Activated CD4-positive, alpha-beta memory T cell treated with anti-CD3 and anti-CD28 coated beads, Interleukin-2, amount 10 ng/mL, durations not matched to agents 7 days and 5 days (primary cell): ENCODE measurements at regions of chr11 and their contacts with region 1.

Region 1: GRCh38 chr11:75142714-75143419 is 8.0 kb upstream of the SLCO2B1 start:
- DNase-seq: peak; percentile 86
- H3K4me3 Mint-ChIP-seq: peak overlapping the region; percentile 45
- H3K27ac Mint-ChIP-seq: peak overlapping the region; percentile 89
- H3K4me1 Mint-ChIP-seq: peaks cover 57% of the 10 kb centered on the region
- H3K27me3 Mint-ChIP-seq: peaks cover 15% of the 10 kb centered on the region

Region 2: DNA sequence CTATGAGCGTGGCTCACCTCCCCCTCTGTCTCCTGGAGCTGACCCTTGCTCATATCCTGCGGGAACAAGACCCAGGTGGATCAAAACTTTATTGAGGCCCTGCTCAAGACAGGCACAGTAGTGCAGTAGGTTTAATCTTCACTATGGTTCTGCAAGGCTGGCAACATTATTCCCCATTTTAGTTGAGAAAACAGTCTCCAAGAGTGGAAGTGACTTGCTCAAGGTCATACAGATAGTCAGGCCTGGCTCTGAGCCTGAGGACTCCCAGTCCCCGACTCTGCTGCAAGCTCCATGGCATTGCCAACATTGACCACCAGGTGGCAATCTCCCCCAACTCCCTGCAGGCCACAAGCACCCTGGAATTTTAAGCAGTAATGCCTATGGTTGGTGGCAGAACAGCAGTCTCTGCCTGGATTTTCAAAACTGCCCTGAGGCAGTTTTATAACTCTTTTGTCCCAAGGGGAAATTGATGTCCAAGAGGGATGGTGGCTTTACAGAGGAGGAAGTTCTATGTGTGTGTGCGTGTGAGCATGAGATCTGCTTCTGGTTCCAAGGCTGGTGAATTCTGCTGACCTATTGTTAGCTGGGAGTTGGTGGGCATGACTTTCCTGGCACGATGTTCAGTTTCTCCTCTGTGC is 120.0 kb before region 1 on chr11:
- CTCF ChIA-PET with region 1: interaction called, 14 read pairs
- POLR2A ChIA-PET with region 1: no interaction called
- DNase-seq: peak; percentile 79
- H3K4me3 Mint-ChIP-seq: no peak overlapping the region
- H3K27ac Mint-ChIP-seq: no peak overlapping the region
- H3K4me1 Mint-ChIP-seq: no peaks in the 10 kb centered on the region
- H3K27me3 Mint-ChIP-seq: no peaks in the 10 kb centered on the region

Region 3: GRCh38 chr11:75041263-75041662 is 101.6 kb before region 1 on chr11:
- CTCF ChIA-PET with region 1: no interaction called
- POLR2A ChIA-PET with region 1: no interaction called
- DNase-seq: no peak
- H3K4me3 Mint-ChIP-seq: no peak overlapping the region
- H3K27ac Mint-ChIP-seq: no peak overlapping the region
- H3K4me1 Mint-ChIP-seq: no peaks in the 10 kb centered on the region
- H3K27me3 Mint-ChIP-seq: peaks cover 12% of the 10 kb centered on the region

Region 4: DNA sequence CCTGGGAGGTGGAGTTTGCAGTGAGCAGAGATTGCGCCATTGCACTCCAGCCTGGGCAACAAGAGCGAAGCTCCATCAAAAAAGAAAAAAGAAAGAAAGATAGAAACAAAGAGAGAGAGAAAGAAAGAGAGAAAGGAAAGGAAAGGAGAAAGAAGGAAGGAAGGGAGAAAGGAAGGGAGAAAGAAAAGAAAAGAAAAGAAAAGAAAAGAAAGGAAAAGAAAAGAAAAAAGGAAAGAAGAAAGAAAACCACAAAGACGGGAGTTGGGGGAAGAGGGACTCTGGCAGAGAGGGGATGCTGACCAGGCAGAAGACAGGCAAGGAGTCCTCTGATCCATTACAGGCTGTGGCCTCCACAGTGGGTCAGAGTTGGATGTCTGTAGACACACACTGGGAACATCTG is 10.8 kb before region 1 on chr11:
- CTCF ChIA-PET with region 1: interaction called, 15 read pairs
- POLR2A ChIA-PET with region 1: interaction called, 4 read pairs
- DNase-seq: no peak
- H3K4me3 Mint-ChIP-seq: no peak overlapping the region
- H3K27ac Mint-ChIP-seq: no peak overlapping the region
- H3K4me1 Mint-ChIP-seq: no peaks in the 10 kb centered on the region
- H3K27me3 Mint-ChIP-seq: peaks cover 38% of the 10 kb centered on the region

Region 5: GRCh38 chr11:75195121-75195551 is 52.3 kb after region 1 on chr11:
- CTCF ChIA-PET with region 1: interaction called, 581 read pairs
- POLR2A ChIA-PET with region 1: interaction called, 3 read pairs
- DNase-seq: no peak
- H3K4me3 Mint-ChIP-seq: no peak overlapping the region
- H3K27ac Mint-ChIP-seq: no peak overlapping the region
- H3K4me1 Mint-ChIP-seq: no peaks in the 10 kb centered on the region
- H3K27me3 Mint-ChIP-seq: peaks cover 14% of the 10 kb centered on the region

Region 6: DNA sequence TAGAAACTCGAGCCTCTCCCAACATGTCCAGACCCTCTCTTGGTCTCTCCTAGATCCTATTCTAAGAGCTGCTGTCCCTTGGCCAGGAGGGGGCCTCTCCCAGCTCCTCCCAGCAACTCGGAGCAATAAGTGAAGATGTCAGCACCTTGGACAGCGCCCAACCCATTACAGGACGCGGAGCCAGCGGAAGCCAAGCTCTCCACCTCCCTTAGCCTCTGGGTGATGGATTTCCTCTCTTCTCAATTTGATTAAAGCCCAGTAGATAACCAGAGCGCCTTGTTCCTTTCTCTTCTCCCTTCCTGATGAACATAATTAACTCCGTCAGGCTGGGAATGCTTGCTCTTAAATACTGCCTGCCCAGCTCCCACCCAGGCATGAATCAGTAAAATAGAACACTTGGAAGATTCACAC is 71.5 kb after region 1 on chr11:
- CTCF ChIA-PET with region 1: interaction called, 581 read pairs
- POLR2A ChIA-PET with region 1: interaction called, 3 read pairs
- DNase-seq: peak; percentile 86
- H3K4me3 Mint-ChIP-seq: no peak overlapping the region
- H3K27ac Mint-ChIP-seq: no peak overlapping the region
- H3K4me1 Mint-ChIP-seq: peaks cover 4% of the 10 kb centered on the region
- H3K27me3 Mint-ChIP-seq: peaks cover 33% of the 10 kb centered on the region

Region 7: DNA sequence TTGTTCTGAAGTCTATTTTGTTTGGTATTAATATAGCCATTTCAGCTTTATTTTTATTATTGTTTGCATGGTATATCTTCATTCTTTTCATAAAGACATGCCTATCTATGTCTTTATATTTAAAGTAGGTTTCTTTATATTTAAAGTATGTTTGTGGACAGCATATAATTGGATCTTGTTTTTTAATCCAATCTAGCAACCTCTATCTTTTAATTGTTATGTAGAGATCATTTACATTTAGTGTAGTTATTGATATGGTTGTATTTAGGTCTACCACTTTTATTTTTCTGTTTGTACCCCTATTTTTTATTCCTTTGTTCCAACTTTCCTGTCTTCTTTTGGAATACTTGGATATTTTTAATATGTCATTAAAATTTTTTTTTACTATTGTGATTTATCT is 111.5 kb after region 1 on chr11:
- CTCF ChIA-PET with region 1: interaction called, 442 read pairs
- POLR2A ChIA-PET with region 1: no interaction called
- DNase-seq: no peak
- H3K4me3 Mint-ChIP-seq: no peak overlapping the region
- H3K27ac Mint-ChIP-seq: no peak overlapping the region
- H3K4me1 Mint-ChIP-seq: no peaks in the 10 kb centered on the region
- H3K27me3 Mint-ChIP-seq: peaks cover 51% of the 10 kb centered on the region